Activated CD4-positive, alpha-beta memory T cell treated with anti-CD3 and anti-CD28 coated beads, Interleukin-2, amount 10 ng/mL, durations not matched to agents 7 days and 5 days (primary cell): ENCODE measurements at regions of chr19 and their contacts with region 1.

Region 1: DNA sequence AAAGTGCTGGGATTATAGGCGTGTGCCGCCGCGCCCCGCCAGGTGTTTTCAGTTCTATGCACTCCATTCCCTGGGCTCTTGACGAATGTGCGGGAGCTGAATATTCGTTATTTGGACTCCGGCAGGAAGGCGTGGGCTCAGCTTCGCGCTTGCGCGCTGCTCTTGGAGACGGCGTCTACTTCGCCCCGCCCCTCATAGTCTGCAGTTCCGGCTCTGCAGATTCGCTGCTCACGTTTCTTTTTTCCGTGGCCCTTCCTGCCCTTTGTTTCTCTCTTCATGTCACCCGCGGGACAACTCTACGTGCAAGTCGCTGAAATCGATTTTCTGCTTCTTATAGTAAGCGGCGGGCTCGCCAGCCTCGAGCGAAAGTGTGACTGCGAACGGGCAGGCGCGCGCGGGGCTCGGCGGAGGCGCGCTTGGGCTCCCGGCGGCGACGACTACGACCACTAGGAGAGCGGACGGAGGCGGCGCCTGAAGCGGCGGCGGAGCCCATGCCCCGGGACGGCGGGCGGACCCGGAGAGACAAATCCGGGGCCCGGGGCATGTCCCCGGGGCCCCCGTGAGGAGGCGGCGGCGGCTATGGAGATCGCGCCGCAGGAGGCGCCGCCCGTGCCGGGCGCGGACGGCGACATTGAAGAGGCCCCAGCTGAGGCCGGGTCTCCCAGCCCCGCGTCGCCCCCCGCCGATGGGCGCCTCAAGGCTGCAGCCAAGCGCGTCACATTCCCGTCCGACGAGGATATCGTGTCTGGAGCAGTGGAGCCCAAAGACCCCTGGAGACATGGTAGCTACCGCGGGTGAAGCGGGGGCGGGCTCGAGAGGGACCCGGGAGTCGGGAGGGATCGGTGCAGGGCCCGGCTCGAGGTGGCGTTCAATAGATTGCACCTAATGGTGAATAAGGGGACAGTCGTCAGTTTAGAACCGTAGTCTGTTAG is at the start of gene PPP1R37:
- DNase-seq: peak; percentile 92
- H3K4me3 Mint-ChIP-seq: peak within 1 kb of the TSS; percentile 77
- H3K27ac Mint-ChIP-seq: peak within 1 kb of the TSS; percentile 81
- H3K4me1 Mint-ChIP-seq: peaks cover 63% of the 10 kb centered on the region
- H3K27me3 Mint-ChIP-seq: no peaks in the 10 kb centered on the region
- total RNA-seq, gene PPP1R37: 16.3 to 16.4 TPM

Region 2: GRCh38 chr19:44954824-44955586 is 138.0 kb before region 1 on chr19 and contains the start of gene CLPTM1:
- CTCF ChIA-PET with region 1: no interaction called
- POLR2A ChIA-PET with region 1: interaction called, 13 read pairs
- DNase-seq: peak; percentile 96
- H3K4me3 Mint-ChIP-seq: peak within 1 kb of the TSS; percentile 96
- H3K27ac Mint-ChIP-seq: peak within 1 kb of the TSS; percentile 91
- H3K4me1 Mint-ChIP-seq: peaks cover 44% of the 10 kb centered on the region
- H3K27me3 Mint-ChIP-seq: no peaks in the 10 kb centered on the region
- total RNA-seq, gene CLPTM1: 66.9 to 68.6 TPM

Region 3: DNA sequence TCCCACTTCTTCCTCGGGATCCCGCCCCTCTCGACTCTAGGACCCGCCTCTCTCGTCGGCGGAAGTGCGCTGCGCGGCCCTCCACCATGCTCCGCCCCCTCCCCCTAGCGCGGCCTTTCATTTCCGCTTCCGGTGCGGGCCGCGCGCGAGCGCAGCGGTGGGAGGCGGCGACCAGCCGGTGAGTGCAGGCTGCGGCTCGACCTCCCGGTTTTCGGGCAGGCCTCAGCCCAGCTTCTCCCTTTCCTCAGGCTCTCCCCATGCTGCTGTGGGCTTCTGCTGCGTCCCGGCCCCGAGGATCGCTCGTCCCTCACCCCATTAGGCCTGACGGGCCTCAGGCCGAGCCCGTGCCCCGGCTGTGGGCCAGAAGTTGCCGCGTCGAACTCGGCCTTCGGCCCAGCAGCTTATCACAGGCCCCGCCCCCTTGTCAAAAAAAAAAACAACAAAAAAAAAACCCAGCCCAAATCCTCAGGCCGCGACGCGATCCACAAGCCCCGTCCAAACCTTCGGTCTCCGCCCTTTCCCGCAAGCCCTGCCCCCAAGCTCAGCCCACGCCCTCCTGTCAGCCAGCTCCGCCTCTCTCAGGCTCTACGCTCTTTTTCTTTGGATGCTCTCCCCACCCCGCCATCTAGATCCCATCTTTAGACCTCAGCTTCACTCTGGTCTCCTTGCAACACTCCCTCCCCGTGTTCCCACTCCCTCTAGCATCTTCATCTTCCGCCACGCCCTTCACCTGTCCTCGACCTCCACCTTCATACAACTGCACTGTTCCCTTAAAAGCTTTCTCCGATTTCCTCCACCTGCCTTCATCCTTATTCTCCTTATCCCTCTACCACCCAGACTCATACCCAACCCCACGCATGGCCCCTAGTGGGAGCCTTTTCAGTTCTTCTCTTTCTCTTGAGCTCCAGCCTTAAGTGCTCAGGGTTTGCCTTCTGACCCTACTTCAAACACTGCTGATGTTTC is 53.8 kb before region 1 on chr19 and contains the start of gene CLASRP:
- CTCF ChIA-PET with region 1: no interaction called
- POLR2A ChIA-PET with region 1: interaction called, 20 read pairs
- DNase-seq: peak; percentile 91
- H3K4me3 Mint-ChIP-seq: peak within 1 kb of the TSS; percentile 81
- H3K27ac Mint-ChIP-seq: peak within 1 kb of the TSS; percentile 93
- H3K4me1 Mint-ChIP-seq: peaks cover 32% of the 10 kb centered on the region
- H3K27me3 Mint-ChIP-seq: no peaks in the 10 kb centered on the region
- total RNA-seq, gene CLASRP: 84.3 to 88.0 TPM

Region 4: DNA sequence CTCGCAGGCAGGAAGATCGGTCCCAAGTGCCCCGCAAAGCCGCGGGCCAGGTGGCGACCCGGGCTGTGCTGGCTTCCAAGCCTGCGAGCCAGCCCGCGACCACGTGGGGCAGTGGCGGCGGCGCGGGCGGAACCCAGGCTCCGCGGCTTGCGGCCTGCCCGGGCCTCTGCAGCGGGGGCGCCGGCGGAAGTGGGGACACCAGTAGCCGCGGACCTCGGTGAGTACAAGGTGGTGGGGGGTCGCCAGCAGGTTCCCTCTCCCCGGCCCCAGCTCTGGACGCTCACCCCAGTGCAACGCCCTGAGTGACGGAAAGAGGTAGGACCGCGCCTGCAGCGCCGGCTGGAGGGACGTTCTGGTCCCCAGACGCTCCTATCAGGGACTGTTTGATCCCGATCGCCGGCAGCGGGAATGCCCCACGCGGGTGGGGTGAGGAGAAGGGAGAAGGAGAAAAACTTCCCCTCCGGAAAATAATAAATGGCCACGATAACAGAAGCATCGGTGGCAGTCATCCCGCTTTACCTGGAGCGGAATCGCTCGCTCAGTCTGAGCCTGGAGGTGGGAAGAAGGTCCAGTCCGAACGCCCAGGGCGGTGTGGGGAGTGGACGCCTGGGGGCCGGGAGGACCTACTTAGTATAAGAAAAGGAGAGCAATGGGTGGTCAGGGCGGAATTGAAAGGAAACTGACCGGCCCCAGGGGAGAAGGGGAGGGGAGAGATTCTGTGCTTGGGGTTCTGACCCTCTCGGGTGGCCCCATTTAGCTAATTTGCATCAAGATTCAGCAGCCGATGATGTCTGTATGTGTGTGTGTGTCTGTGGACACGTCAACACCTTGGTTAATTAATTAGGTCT is 13.7 kb before region 1 on chr19 and contains the start of gene GEMIN7:
- CTCF ChIA-PET with region 1: interaction called, 21 read pairs
- POLR2A ChIA-PET with region 1: interaction called, 52 read pairs
- DNase-seq: peak; percentile 83
- H3K4me3 Mint-ChIP-seq: peak within 1 kb of the TSS; percentile 96
- H3K27ac Mint-ChIP-seq: peak within 1 kb of the TSS; percentile 83
- H3K4me1 Mint-ChIP-seq: peaks cover 56% of the 10 kb centered on the region
- H3K27me3 Mint-ChIP-seq: no peaks in the 10 kb centered on the region
- total RNA-seq, gene GEMIN7: 31.7 to 35.5 TPM

Region 5: GRCh38 chr19:45117669-45118068 is 24.7 kb after region 1 on chr19:
- CTCF ChIA-PET with region 1: interaction called, 3 read pairs
- POLR2A ChIA-PET with region 1: interaction called, 10 read pairs
- DNase-seq: no peak
- H3K4me3 Mint-ChIP-seq: no peak overlapping the region
- H3K27ac Mint-ChIP-seq: no peak overlapping the region
- H3K4me1 Mint-ChIP-seq: peaks cover 47% of the 10 kb centered on the region
- H3K27me3 Mint-ChIP-seq: no peaks in the 10 kb centered on the region

Region 6: DNA sequence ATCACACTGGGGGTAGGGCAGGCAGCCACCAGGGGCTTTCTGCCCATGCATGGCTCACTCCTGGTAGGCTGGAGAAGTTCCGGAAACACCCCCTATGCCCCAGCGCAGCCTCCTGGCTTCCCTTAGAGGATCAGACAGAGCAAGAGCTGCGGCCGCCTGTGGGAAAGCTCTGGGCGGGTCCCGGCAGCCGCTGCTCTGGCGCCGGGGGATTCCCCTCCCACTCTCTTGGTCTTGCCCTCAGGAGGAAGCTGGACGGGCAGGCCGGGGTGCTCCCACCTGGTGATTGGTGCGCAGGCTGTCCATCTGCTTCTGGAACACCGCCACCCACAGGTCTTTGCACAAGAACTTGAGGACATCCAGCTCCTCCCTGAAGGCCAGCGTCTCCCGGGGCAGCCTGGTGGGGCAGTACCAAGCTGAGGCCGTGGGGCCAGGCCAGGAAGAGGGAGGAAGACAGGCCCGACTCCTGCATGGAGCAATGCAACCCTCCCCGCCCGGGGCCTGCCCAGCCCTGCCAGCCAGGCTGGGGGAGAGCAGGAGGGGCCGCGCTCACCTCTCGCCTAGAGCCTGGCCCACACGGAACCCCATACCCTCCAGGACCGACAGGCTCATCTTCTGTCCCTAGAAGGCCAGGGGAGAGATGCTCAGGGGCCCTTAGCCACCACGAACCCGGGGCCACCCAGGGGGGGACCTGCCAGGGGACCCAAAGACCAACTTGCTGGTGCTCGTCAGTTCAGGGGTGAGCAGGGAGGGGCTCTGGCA is 71.7 kb after region 1 on chr19:
- CTCF ChIA-PET with region 1: interaction called, 3 read pairs
- POLR2A ChIA-PET with region 1: interaction called, 12 read pairs
- DNase-seq: peak; percentile 66
- H3K4me3 Mint-ChIP-seq: no peak overlapping the region
- H3K27ac Mint-ChIP-seq: no peak overlapping the region
- H3K4me1 Mint-ChIP-seq: peaks cover 34% of the 10 kb centered on the region
- H3K27me3 Mint-ChIP-seq: peaks cover 3% of the 10 kb centered on the region